ENCODE measurements at regions of chr6 and their contacts with region 1.

Region 1: DNA sequence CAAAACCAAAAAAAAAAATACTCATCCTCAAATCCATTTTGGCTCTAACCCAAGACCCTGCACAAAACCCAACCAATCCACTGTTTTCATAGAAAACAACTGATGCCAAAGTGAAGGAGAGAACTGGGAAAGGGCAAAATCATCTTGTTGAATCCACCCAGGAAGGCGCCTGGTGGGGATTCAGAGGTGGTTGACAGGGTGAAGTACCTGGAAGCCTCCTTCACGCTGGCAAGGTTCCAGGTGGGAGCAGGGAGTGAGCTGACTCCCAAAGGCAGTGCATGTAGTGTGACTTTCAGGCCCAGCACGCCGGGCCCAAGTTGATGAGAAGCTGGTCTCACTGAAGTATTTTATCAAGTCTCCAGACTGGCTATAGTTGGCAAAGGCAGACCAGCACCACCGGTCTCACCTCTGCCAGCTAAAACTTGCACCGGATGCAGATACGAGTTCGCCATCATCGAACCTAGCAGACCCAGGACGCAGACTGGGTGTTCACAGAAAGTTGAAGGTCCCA is 16.5 kb downstream of the PPP1R10 start:
- DNase-seq: no peak
- H3K4me3 Mint-ChIP-seq: no peak overlapping the region
- H3K27ac Mint-ChIP-seq: peak overlapping the region; percentile 37
- H3K4me1 Mint-ChIP-seq: peaks cover 9% of the 10 kb centered on the region
- H3K27me3 Mint-ChIP-seq: no peaks in the 10 kb centered on the region

Region 2: GRCh38 chr6:30272017-30272416 is 328.5 kb before region 1 on chr6:
- CTCF ChIA-PET with region 1: no interaction called
- intact Hi-C with region 1: no loop called
- DNase-seq: no peak
- H3K4me3 Mint-ChIP-seq: no peak overlapping the region
- H3K27ac Mint-ChIP-seq: no peak overlapping the region
- H3K4me1 Mint-ChIP-seq: no peaks in the 10 kb centered on the region
- H3K27me3 Mint-ChIP-seq: no peaks in the 10 kb centered on the region

Region 3: DNA sequence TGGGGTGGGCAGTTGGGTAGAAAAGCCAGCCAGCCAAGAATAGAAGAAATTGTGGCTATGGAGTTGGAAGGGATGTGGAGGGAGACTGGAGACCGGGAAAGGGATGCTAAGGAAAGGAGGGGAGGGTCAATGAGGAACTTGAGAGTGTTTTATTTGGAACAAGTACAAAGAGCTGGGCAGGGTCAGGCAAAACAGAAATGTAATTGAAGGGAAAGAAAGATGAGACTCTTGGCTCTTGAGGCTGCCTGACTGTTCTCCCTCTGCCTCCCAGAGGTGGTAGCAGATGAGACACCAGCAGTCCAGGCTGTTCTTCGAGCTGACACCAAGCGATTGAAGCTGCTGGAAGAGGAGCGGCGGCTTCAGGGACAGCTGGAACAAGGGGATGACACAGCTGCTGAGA is 16.6 kb before region 1 on chr6:
- CTCF ChIA-PET with region 1: interaction called, 12 read pairs
- intact Hi-C with region 1: no loop called
- DNase-seq: no peak
- H3K4me3 Mint-ChIP-seq: no peak overlapping the region
- H3K27ac Mint-ChIP-seq: no peak overlapping the region
- H3K4me1 Mint-ChIP-seq: no peaks in the 10 kb centered on the region
- H3K27me3 Mint-ChIP-seq: no peaks in the 10 kb centered on the region

Region 4: DNA sequence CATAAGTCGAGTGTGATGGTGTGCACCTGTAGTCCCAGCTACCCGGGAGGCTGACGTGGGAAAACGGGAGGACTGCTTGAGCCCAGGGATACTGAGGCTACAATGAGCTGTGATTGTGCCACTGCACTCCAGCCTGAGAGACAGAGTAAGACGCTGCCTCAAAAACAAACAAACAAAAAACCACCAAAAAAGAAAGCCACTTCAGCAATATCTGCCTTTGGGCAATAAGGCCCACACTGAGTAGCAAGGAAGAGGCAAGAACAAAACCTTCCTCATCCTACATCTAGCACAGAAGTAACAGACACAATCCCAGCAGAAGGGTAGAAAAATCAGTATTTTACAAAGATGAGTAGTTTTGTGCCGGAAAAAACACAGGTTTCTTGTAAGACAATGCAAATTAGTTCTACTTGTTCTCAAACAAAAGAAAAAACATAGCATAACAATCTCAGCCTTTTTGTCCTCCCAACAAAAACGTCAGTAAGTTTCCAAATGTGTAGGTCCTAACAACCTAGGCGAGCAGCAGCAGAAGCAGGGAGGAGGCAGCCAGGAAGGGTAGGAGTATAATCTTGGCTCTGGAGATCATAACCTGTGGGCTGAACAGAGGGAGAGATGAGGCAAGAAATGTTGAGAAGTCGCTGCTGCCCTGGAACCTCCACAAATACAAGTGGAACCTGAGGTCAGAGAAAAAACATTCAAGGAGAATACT is 10.8 kb after region 1 on chr6:
- CTCF ChIA-PET with region 1: interaction called, 38 read pairs
- intact Hi-C with region 1: no loop called
- DNase-seq: no peak
- H3K4me3 Mint-ChIP-seq: no peak overlapping the region
- H3K27ac Mint-ChIP-seq: peak overlapping the region; percentile 95
- H3K4me1 Mint-ChIP-seq: peaks cover 63% of the 10 kb centered on the region
- H3K27me3 Mint-ChIP-seq: no peaks in the 10 kb centered on the region

Region 5: GRCh38 chr6:30640476-30640875 is 40.0 kb after region 1 on chr6:
- CTCF ChIA-PET with region 1: no interaction called
- intact Hi-C with region 1: no loop called
- DNase-seq: no peak
- H3K4me3 Mint-ChIP-seq: no peak overlapping the region
- H3K27ac Mint-ChIP-seq: no peak overlapping the region
- H3K4me1 Mint-ChIP-seq: peaks cover 14% of the 10 kb centered on the region
- H3K27me3 Mint-ChIP-seq: no peaks in the 10 kb centered on the region

Measured in activated naive CD4-positive, alpha-beta T cell treated with anti-CD3 and anti-CD28 coated beads for 36 hours (primary cell).